IMR-90 (cell line): ENCODE measurements at regions of chr19 and their contacts with region 1.

Region 1: DNA sequence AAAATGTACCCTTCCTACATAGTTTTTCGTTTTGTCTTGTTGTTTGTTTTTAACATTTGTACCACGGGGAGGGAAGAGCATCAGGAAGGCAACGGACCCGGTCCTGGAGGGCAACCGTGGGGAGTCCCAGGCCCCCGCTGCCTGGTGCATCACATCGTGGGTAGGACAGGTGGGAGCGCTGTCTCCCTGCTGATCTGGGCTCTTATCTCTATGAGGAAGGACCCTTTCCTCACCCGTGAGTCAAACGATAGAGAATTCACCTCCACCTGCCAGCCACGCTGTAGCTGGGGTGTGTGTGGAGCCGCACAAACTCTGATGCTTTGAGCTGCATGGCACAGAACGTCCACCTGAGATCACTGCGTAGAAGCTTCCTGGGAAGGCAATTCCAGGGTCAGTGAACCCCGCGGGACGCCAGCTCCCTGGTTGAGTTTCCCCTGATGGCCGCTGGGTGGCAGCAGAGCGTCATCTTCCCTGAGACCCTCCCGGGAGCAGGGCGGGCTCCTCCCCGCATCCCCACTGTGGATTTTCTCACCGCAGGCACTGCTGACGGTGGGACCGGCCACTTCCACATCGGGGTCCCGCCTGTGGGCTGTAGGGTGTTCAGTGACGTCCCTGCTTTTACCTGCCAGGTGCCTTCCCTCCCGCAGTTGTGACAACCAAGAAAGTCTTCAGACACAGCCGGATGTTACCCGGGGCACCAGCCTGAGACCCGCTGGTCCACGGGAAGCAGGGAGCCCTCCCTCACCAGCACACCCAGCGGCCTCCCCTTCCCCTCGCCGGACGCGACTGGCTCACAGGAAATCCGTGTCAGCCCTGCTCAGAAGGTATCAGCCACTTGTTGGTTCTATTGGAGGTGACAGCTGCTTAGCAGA is 54.7 kb downstream of the ZNF787 start:
- DNase-seq: peak; percentile 19
- ATAC-seq: peak; percentile 97
- H3K4me3 ChIP-seq: peak overlapping the region; percentile 10; the same call in 1 of the 2 replicates
- H3K27ac ChIP-seq: no peak overlapping the region
- H3K4me1 ChIP-seq: no peaks in the 10 kb centered on the region
- H3K27me3 ChIP-seq: no peaks in the 10 kb centered on the region; the same call in 1 of the 2 replicates
- CTCF ChIP-seq: peak; percentile 72
- POLR2A ChIP-seq: no peak
- RAD21 ChIP-seq: peak; percentile 67

Region 2: DNA sequence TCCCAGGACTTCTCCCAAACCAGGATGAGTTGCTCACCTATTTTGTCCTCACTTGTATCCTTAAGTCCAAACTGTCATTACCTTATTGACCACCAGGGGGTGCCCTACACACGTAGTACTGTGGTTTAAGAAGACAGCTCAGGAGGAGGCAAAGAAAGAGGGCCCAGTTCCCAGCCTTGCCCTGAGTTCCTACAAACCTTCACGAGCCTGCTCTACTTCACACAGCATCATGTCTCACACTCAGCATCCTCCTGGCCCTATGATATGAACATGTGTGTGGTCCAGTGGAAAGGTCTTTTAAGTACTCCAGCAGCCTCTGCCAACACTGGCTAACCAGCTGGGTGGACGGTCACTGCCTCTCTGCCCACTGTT is 433.9 kb before region 1 on chr19:
- CTCF ChIA-PET with region 1: no interaction called
- POLR2A ChIA-PET with region 1: no interaction called
- dilution Hi-C with region 1: no loop called
- in situ Hi-C with region 1: no loop called
- intact Hi-C with region 1: loop called (anchors 10 kb)
- DNase-seq: peak; percentile 96
- ATAC-seq: peak; percentile 73
- H3K4me3 ChIP-seq: no peak overlapping the region
- H3K27ac ChIP-seq: no peak overlapping the region
- H3K4me1 ChIP-seq: peaks cover 9% of the 10 kb centered on the region
- H3K27me3 ChIP-seq: no peaks in the 10 kb centered on the region
- CTCF ChIP-seq: peak; percentile 85
- POLR2A ChIP-seq: 0 out of 2 replicates have a peak, but pooled peaks have one; percentile 42
- RAD21 ChIP-seq: peak; percentile 79

Region 3: GRCh38 chr19:56333505-56333904 is 267.1 kb after region 1 on chr19:
- CTCF ChIA-PET with region 1: interaction called, 9 read pairs
- POLR2A ChIA-PET with region 1: no interaction called
- dilution Hi-C with region 1: no loop called
- in situ Hi-C with region 1: no loop called
- intact Hi-C with region 1: loop called (anchors 2 kb)
- DNase-seq: peak; percentile 56
- ATAC-seq: peak; percentile 99
- H3K4me3 ChIP-seq: no peak overlapping the region
- H3K27ac ChIP-seq: no peak overlapping the region
- H3K4me1 ChIP-seq: no peaks in the 10 kb centered on the region
- H3K27me3 ChIP-seq: no peaks in the 10 kb centered on the region
- CTCF ChIP-seq: peak; percentile 74
- POLR2A ChIP-seq: 0 out of 2 replicates have a peak, but pooled peaks have one; percentile 27
- RAD21 ChIP-seq: peak; percentile 87

Region 4: DNA sequence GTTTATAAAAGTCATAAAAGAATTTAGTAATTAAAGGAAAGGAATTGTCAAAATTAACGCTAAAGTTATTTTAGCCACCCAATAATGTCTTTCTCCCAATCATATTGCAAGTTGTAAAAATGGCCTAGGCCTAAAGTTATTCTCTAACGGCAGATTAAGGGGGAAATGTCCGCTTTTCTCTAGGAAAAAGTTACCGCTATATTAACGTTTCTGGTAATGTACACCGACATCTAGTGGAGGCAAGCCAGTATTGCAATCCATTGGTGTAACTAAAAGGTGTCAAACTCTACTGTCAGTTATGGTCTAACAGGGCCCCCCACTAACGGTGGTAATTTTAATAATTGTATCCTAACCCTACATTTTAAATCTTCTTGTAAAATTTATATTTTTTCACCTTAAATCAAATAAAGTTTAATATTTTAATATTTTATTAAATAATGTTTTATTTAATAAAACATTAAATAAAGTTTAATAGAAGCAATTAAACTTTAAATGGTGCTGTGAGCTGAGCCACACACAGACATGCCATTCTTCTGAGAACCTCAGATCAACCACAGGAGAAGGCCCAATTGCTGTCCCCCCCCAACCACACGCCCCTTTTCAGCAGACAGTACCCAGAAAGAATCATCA is 284.1 kb after region 1 on chr19:
- CTCF ChIA-PET with region 1: no interaction called
- POLR2A ChIA-PET with region 1: no interaction called
- dilution Hi-C with region 1: no loop called
- in situ Hi-C with region 1: loop called (anchors 10 kb)
- intact Hi-C with region 1: loop called (anchors 1 kb)
- DNase-seq: peak; percentile 41
- ATAC-seq: peak; percentile 81
- H3K4me3 ChIP-seq: no peak overlapping the region
- H3K27ac ChIP-seq: no peak overlapping the region
- H3K4me1 ChIP-seq: no peaks in the 10 kb centered on the region
- H3K27me3 ChIP-seq: no peaks in the 10 kb centered on the region
- CTCF ChIP-seq: peak; percentile 70
- POLR2A ChIP-seq: no peak
- RAD21 ChIP-seq: peak; percentile 65

Region 5: GRCh38 chr19:57103573-57104277 is 1037.3 kb after region 1 on chr19:
- CTCF ChIA-PET with region 1: interaction called, 3 read pairs
- POLR2A ChIA-PET with region 1: no interaction called
- dilution Hi-C with region 1: no loop called
- in situ Hi-C with region 1: no loop called
- intact Hi-C with region 1: loop called (anchors 10 kb)
- DNase-seq: peak; percentile 47
- ATAC-seq: peak; percentile 89
- H3K4me3 ChIP-seq: peak overlapping the region; percentile 35; the same call in 1 of the 2 replicates
- H3K27ac ChIP-seq: no peak overlapping the region
- H3K4me1 ChIP-seq: peaks cover 1% of the 10 kb centered on the region; the same call in 1 of the 2 replicates
- H3K27me3 ChIP-seq: no peaks in the 10 kb centered on the region
- CTCF ChIP-seq: peak; percentile 78
- POLR2A ChIP-seq: no peak
- RAD21 ChIP-seq: peak; percentile 84